G401 (cell line): ENCODE measurements at regions of chr16 and their contacts with region 1.

Region 1: DNA sequence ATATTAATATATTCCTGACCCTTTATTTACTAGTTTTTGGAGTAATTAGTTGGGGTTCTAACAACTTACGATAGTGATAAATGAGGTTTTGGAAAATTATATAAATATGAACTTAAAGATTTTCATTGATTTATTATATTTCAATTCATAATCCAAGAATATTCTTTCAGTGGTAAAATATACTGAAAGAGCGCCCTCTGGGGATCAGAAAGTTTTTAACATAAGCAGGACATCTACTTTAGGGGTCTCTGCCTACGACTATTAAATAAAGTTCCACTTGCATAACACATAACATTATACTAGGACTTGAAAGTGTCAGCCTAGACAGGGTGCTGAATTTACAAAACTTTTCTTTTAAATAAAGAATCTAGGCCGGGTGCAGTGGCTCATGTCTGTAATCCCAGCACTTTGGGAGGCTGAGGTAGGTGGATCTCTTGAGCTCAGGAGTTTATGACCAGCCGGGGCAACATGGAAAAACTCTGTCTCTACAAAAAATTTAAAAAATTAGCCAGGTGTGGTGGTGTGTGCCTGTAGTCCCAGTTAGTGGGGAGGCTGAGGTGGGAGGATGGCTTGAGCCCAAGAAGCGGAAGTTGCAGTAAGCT is 15.6 kb downstream of the RFWD3 start:
- DNase-seq: peak; percentile 11

Region 2: GRCh38 chr16:74608944-74609343 is 42.1 kb before region 1 on chr16:
- in situ Hi-C with region 1: no loop called
- DNase-seq: no peak

Region 3: GRCh38 chr16:74718741-74719610 is 67.9 kb after region 1 on chr16:
- in situ Hi-C with region 1: no loop called
- DNase-seq: no peak

Region 4: DNA sequence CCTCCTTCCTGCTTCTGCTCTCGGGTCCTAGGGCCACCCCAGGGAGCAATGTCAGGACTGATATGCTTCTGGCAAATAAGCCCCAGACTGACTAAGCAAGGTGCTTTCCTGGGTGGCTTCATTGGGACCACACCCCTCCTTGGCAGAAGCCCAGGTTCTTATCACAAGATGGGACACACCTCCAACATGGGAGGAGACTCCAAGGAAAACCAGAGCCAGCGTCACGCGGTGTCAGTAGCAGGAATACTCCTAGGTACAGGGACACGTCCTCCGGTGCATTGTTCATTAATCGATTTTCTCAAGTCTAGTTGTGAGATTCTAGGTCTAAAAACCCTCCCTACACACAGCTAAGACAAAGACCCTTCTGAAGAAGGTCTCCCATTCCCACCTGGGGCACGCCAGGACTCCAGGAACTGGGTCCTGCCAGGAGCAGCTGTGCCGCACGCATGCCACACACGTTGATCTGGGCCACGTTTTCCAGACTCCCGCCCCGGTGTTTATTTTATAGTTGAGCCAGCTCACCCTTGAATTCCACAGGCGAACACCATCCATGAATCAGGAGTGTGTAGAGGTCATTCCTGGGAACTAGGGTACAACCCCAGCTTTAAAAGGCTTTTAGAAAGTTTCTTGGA is 92.7 kb after region 1 on chr16:
- in situ Hi-C with region 1: loop called (anchors 5 kb)
- DNase-seq: no peak

Region 5: DNA sequence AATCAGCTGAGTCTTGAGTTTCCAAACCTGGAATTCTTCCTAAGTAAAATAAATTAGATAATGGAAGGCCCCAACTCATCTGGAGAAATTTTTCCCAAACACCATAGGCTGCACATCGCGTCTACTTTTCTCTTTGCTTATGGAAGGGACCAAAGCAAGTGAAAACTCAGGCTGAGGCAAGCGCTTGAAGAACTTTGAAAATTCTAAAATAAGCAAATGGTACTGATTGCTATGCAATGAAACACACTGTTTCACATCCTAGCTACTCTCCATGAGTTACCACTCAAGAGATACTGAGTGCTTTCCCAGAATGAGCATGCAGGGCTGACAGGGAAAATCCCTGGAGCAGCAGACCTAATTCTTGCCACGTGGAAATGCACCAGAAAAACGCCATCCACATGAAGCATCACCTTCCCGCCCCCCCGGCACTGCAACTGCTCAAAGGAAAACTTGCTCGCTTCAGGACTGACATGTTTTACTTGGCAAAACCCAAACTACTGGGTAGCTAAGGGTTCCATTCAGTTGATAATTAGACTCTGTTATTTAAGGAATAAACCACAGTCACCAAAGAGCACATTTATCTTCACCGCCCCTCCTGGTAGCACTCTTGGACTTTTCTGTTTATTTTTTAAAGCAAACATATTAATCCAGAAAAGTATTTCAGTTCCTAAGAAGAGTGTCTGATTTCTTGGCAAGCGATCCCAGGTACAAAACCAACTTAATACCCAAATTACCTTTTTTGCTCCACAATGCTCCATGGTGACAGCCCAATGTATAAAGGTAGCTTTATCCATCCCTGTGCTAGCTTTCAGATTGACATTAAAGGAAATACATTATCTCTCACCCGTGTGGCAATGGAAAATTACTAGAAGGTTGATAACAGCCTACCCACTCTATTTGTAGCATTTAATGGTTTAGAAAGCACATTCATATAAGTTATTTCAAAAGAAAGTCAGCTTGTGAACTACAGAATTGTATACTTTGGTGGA is 271.4 kb after region 1 on chr16:
- in situ Hi-C with region 1: no loop called
- DNase-seq: no peak